ENCODE measurements at regions of chr2 and their contacts with region 1.

Region 1: GRCh38 chr2:166180951-166181812 is 53.4 kb upstream of the SCN1A start:
- DNase-seq: peak; percentile 67
- H3K4me3 Mint-ChIP-seq: no peak overlapping the region
- H3K27ac Mint-ChIP-seq: no peak overlapping the region
- H3K4me1 Mint-ChIP-seq: peaks cover 17% of the 10 kb centered on the region
- H3K27me3 Mint-ChIP-seq: peaks cover 11% of the 10 kb centered on the region
- CTCF ChIP-seq: peak; percentile 51

Region 2: DNA sequence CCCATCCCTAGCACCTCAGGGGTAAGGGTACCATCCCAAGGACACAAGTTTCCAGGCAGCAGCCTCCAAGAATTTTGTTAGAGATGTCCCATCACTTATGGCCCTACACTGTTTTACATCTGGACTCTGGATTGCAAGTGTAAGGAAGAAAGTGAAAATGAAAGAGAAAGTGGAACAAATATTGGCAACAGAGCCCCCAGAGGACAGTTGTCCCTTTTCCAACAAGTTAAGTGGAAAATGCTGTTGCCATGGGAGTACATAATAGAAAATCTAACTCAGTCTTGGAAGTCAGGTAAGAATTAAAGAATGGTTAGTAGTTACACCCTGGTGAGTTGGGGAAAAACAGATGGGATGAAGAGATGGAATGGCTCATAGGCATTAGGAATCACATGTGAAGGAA is 278.3 kb before region 1 on chr2:
- CTCF ChIA-PET with region 1: no interaction called
- POLR2A ChIA-PET with region 1: no interaction called
- intact Hi-C with region 1: no loop called
- DNase-seq: peak; percentile 10
- H3K4me3 Mint-ChIP-seq: no peak overlapping the region
- H3K27ac Mint-ChIP-seq: peak overlapping the region; percentile 17
- H3K4me1 Mint-ChIP-seq: peaks cover 35% of the 10 kb centered on the region
- H3K27me3 Mint-ChIP-seq: no peaks in the 10 kb centered on the region
- CTCF ChIP-seq: no peak

Region 3: DNA sequence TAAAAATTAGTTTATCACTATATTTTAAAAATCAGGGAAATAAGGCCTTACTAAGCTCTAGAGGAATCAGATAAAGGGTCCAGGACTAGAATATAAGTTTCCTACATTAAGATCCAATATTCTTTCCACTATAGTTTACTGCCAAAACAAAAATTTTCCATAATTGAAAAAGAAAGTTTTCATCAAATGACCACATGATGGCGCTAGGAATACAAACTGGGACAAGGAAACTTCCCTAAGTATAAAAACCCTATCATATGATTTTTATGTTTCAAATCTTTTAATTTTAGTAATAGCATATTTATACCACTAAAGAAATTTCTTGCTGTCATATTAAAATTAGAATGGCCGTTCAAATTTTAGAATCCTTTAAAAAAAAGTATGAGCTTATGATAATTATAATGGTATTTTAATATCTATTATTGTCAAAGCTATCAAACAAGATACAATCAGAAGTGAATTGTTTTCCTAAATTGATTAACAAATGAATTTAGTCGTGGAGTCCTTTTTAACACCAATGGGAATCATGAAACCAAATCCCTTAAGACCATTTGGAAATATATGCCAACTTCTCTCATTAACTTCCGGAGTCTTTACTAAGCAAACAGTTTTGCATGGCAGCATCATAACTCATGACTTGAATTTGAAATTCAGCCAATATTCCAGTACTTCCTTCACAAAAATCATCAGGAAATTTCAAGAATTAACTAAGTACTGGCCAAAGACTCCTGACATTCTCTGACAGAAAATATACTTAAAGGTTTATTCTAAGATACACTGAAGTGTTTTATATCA is 123.6 kb before region 1 on chr2:
- CTCF ChIA-PET with region 1: interaction called, 6 read pairs
- POLR2A ChIA-PET with region 1: no interaction called
- intact Hi-C with region 1: loop called (anchors 5 kb)
- DNase-seq: peak; percentile 44
- H3K4me3 Mint-ChIP-seq: no peak overlapping the region
- H3K27ac Mint-ChIP-seq: no peak overlapping the region
- H3K4me1 Mint-ChIP-seq: no peaks in the 10 kb centered on the region
- H3K27me3 Mint-ChIP-seq: peaks cover 39% of the 10 kb centered on the region
- CTCF ChIP-seq: peak; percentile 46

Region 4: GRCh38 chr2:166375736-166376487 is 194.7 kb after region 1 on chr2 and contains the start of gene SCN9A:
- CTCF ChIA-PET with region 1: interaction called, 7 read pairs
- POLR2A ChIA-PET with region 1: no interaction called
- intact Hi-C with region 1: loop called (anchors 5 kb)
- DNase-seq: peak; percentile 61
- H3K4me3 Mint-ChIP-seq: peak within 1 kb of the TSS; percentile 75
- H3K27ac Mint-ChIP-seq: no peak within 1 kb of the TSS
- H3K4me1 Mint-ChIP-seq: peaks cover 6% of the 10 kb centered on the region
- H3K27me3 Mint-ChIP-seq: peaks cover 63% of the 10 kb centered on the region
- CTCF ChIP-seq: peak; percentile 5
- total RNA-seq, gene SCN9A: 1.3 and 1.9 TPM in 2 replicates

Region 5: DNA sequence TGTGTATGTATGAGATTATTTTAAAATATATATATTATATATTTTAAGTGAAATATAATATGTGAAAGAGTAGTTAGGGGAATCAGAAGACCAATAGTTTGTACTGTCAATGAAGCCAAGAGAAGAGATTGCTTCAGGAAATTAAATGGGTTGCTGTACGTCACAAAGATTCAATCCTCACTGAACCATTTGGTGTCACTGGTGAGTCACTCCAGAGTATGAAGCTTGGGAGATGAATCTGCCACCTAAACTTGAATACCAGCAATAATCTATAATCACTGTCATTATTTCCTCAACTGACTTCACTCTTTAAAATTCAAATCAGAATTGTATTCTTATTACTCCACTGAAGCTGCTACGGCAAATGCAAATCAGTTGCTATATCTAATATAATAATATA is 236.5 kb after region 1 on chr2:
- CTCF ChIA-PET with region 1: interaction called, 36 read pairs
- POLR2A ChIA-PET with region 1: interaction called, 5 read pairs
- intact Hi-C with region 1: loop called (anchors 1 kb)
- DNase-seq: peak; percentile 58
- H3K4me3 Mint-ChIP-seq: no peak overlapping the region
- H3K27ac Mint-ChIP-seq: no peak overlapping the region
- H3K4me1 Mint-ChIP-seq: no peaks in the 10 kb centered on the region
- H3K27me3 Mint-ChIP-seq: peaks cover 6% of the 10 kb centered on the region
- CTCF ChIP-seq: no peak